Activated CD4-positive, alpha-beta T cell treated with anti-CD3 and anti-CD28 coated beads for 36 hours (primary cell): ENCODE measurements at regions of chr5 and their contacts with region 1.

Region 1: GRCh38 chr5:177454397-177455035 is 7.9 kb downstream of the PRR7 start:
- DNase-seq: peak; percentile 96
- ATAC-seq: peak; percentile 47
- H3K4me3 Mint-ChIP-seq: peak overlapping the region; percentile 80
- H3K27ac Mint-ChIP-seq: no peak overlapping the region
- H3K4me1 Mint-ChIP-seq: peaks cover 27% of the 10 kb centered on the region
- H3K27me3 Mint-ChIP-seq: no peaks in the 10 kb centered on the region

Region 2: GRCh38 chr5:177194274-177194673 is 260.2 kb before region 1 on chr5:
- CTCF ChIA-PET with region 1: no interaction called
- POLR2A ChIA-PET with region 1: interaction called, 11 read pairs
- intact Hi-C with region 1: no loop called
- DNase-seq: no peak
- ATAC-seq: no peak
- H3K4me3 Mint-ChIP-seq: no peak overlapping the region
- H3K27ac Mint-ChIP-seq: no peak overlapping the region
- H3K4me1 Mint-ChIP-seq: peaks cover 7% of the 10 kb centered on the region
- H3K27me3 Mint-ChIP-seq: no peaks in the 10 kb centered on the region

Region 3: GRCh38 chr5:177317959-177318377 is 136.5 kb before region 1 on chr5:
- CTCF ChIA-PET with region 1: interaction called, 18 read pairs
- POLR2A ChIA-PET with region 1: no interaction called
- intact Hi-C with region 1: loop called (anchors 1 to 2 kb)
- DNase-seq: peak; percentile 87
- ATAC-seq: peak; percentile 75
- H3K4me3 Mint-ChIP-seq: no peak overlapping the region
- H3K27ac Mint-ChIP-seq: no peak overlapping the region
- H3K4me1 Mint-ChIP-seq: peaks cover 19% of the 10 kb centered on the region
- H3K27me3 Mint-ChIP-seq: no peaks in the 10 kb centered on the region

Region 4: DNA sequence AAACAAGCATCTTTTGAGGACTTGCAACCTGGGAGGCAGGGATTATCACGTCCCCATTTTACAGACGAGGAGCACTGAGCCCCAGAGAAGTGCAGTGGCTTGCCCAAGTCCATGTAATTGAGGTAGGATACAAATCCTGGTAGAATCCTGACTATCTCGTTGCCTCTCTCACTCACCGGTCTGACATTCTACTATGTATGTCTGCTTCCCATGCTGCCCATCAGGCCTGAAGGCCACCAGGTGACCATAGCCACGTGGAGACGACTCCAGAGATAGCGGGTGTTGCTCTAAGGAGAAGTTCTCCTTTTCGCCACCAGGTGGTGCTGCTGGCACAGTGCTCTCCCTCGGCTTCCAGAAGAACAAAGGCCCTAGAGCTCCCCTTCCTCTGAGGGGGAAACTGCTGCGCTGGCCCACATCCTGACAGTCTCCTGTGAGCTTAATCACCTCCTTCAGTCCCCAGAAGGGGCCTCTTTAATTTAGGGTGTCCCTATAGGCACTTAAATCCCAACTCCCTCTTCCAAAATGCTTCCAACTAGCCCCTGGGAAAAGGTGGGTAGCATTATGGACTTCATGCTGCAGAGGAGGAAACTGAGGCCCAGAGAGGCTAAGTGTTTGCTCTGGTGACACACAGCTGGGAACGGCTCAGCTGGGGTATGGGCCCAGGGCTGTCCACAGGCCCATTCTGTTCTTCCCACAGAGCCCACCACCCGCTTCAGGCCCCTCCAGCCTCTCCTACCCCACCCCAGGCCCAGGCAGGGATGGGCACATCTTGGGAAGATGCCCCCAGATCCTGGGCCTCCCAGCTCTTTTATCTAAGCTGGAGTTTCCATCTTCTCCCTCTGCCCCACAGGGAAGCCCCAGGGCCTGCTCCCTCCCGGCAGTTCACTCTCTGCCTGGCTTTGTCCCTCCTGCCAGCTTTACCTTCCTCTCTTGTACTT is 63.9 kb before region 1 on chr5:
- CTCF ChIA-PET with region 1: interaction called, 92 read pairs
- POLR2A ChIA-PET with region 1: interaction called, 12 read pairs
- intact Hi-C with region 1: loop called (anchors 1 kb)
- DNase-seq: peak; percentile 94
- ATAC-seq: peak; percentile 68
- H3K4me3 Mint-ChIP-seq: peak overlapping the region; percentile 52
- H3K27ac Mint-ChIP-seq: peak overlapping the region; percentile 87
- H3K4me1 Mint-ChIP-seq: peaks cover 36% of the 10 kb centered on the region
- H3K27me3 Mint-ChIP-seq: no peaks in the 10 kb centered on the region

Region 5: DNA sequence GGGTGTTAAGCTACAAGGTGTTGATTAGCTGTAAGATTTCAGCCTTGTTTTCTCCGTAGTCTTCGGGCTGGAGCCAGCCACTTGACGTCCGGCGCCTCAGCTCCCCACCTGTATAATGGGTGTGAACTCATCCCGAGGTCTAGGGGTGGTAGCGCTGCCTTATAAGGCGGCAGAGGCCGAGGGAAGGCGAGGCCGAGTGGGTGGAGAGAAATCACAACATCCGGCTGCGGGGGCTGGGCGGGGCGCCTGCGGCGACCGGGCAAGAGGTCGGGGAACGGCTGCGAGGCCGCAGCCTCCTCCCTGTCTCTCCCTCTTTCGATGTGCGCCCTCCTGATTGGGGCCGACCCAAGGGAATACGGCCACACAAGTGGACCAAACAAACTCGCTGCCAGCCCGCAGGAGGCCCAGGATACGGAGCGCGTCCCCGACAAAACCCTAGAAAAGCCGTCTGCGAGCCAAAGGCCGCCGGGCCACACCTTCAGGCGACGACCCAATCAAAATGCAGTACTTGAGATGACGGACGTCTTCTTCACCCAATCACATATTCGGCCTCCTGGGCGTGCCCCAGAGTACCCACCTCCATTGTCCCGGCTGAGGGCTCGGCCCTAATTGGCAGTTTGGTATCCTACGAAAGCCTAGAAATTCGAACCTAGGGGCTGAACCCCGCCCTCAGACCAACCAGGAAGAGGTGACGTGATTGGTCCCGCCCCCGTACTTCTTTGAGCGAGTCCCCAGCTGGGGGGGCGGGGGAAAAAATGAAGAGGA is 28.5 kb before region 1 on chr5:
- CTCF ChIA-PET with region 1: interaction called, 131 read pairs
- POLR2A ChIA-PET with region 1: interaction called, 85 read pairs
- intact Hi-C with region 1: loop called (anchors 1 kb)
- DNase-seq: peak; percentile 100
- ATAC-seq: peak; percentile 77
- H3K4me3 Mint-ChIP-seq: peak overlapping the region; percentile 81
- H3K27ac Mint-ChIP-seq: peak overlapping the region; percentile 94
- H3K4me1 Mint-ChIP-seq: peaks cover 36% of the 10 kb centered on the region
- H3K27me3 Mint-ChIP-seq: no peaks in the 10 kb centered on the region

Region 6: GRCh38 chr5:177473461-177474001 is 19.0 kb after region 1 on chr5 and contains the start of gene DBN1:
- CTCF ChIA-PET with region 1: interaction called, 9 read pairs
- POLR2A ChIA-PET with region 1: interaction called, 3 read pairs
- intact Hi-C with region 1: loop called in 1 of 2 experiments (anchors 1 kb)
- DNase-seq: peak; percentile 62
- ATAC-seq: peak; percentile 44
- H3K4me3 Mint-ChIP-seq: peak within 1 kb of the TSS; percentile 65
- H3K27ac Mint-ChIP-seq: peak within 1 kb of the TSS; percentile 70
- H3K4me1 Mint-ChIP-seq: peaks cover 35% of the 10 kb centered on the region
- H3K27me3 Mint-ChIP-seq: peaks cover 4% of the 10 kb centered on the region
- total RNA-seq, gene DBN1: 29.5 to 41.2 TPM

Region 7: DNA sequence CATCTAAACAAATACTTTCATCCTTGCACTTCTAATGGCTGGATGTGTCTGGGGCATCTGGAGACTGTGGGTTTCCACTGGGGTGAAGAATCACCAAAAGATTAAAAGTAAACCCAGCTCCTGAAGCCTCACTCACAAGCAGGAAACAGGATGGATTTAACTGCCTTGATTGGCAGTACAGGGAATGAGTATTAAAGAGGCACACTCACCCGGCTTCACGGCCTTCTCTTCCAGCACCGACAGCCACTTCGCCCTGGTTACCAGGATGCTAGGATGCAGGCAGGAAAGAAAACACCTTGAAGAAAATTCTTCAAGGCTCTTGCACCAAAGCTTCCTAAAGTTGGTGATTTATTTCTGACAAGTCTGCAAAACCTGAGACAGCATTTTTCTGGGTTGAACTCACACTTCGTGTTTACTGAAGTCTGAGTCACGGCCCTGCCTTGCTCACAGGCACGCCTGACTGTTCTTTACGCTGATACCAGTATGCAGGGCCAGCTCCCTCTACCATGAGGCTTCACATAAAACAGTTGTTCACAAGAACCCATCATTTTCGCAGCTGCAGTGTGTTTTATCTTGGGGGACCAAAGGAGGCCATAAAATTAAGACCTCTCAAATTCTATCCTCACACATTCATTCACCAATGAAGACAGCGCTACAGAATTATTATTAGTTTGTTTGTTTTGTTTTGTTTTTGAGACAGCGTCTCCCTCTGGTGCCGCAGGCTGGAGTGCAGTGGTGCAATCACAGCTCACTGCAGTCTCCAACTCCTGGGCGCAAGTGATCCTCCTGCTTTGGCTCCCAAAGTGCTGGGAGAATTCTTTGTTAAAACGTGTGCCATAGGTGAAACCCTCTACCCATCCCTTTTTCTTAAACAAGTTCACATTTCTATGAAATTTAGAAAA is 1332.6 kb after region 1 on chr5:
- CTCF ChIA-PET with region 1: no interaction called
- POLR2A ChIA-PET with region 1: no interaction called
- intact Hi-C with region 1: no loop called
- DNase-seq: no peak
- ATAC-seq: no peak
- H3K4me3 Mint-ChIP-seq: no peak overlapping the region
- H3K27ac Mint-ChIP-seq: no peak overlapping the region
- H3K4me1 Mint-ChIP-seq: no peaks in the 10 kb centered on the region
- H3K27me3 Mint-ChIP-seq: peaks cover 2% of the 10 kb centered on the region